Right cardiac atrium (tissue), 5 donors: ENCODE measurements at regions of chr10 and their contacts with region 1.

Region 1: DNA sequence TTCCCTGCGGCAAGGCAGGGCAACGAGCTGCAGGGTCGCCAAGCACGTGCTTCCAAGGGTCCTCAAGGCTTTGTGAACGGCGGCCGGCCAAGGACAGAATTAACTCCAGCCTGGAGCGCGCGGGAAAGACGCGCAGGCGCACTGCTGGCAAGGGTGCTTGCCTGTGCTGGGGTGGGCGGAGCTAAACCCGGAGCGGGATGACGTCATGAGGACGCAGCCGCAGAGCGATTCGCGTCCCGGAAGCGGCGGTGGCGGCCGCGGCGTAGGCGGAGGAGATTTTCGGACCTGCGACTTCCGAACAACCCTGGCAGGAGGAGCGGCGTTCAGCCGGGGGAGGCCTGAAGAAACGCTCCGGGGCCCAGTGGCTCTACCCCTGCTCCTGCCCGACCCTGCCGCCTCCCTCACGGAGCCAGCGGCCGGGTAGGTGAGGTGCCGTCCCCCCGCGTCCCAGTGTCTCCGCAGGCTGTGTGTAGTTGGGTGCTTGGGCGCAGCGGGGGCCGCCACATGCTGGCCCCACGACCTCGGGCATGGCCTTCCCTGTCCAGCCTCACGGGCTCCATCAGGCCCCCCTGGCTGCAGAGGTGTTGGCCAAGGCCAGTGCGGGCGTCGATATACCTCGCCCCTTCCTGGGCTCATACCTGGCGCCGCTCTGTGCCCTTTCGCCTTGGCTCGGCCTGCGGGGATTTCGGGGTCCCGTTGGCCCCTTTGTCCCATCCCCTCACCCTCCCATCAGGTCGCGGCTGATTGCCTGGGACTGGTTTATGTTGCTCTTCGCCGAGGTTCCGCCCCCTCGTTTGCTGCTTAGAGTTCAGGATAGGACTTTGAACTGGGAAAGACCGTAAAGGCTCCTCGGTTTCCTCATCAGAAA is at the start of gene ZFYVE27:
- DNase-seq: peak; percentile 97 to 99 (median 99)
- ATAC-seq: peak; percentile 95 to 96
- H3K4me3 ChIP-seq: peak within 1 kb of the TSS; percentile 74
- H3K27ac ChIP-seq: peak within 1 kb of the TSS; percentile 76
- H3K4me1 ChIP-seq: peaks cover 4% of the 10 kb centered on the region
- H3K27me3 ChIP-seq: no peaks in the 10 kb centered on the region
- total RNA-seq, gene ZFYVE27: 14.8 to 20.6 (median 17.7) TPM

Region 2: DNA sequence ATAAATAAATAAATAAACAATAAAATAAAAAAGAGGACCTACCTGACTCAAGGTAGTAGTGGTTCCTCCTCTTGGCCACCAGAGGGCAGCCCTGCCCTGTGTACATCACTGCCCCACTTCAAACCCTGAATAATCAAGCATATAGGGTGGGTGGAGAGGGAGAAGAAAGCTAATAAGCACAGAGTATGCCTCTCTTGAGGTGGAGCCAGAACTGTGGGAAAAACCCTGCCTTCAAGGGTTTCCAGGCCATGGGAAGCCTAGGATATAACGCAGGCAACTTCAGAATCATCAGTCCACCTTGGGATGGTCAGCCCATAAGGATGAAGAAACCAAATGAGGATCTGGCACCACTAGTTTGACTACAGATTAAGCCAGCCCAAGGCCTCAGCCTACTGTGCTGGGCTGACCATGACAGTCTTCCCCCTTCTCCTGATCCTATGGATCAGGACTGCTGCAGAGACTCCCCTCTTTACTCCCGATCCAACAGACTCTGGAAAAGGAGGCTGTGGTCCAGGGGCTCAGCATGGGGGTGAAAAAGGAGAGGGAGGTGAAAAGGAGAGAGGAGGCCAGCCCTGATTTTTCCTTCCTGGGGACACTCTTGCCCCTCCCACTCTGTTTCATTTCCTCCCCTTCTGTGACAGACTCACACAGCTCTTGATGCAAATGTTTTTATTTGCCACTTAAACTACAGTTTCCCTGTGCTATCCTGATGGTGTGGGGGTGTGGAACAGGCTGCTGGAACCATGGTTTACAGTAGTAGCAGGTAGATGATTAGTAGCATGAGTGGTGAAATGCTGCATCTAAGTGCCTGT is 60.2 kb before region 1 on chr10:
- intact Hi-C with region 1: loop called in 3 of 4 experiments (anchors 5 to 10 kb)
- DNase-seq: peak in 1 of 3 donors; percentile 53
- ATAC-seq: peak; percentile 65 to 68
- H3K4me3 ChIP-seq: no peak overlapping the region
- H3K27ac ChIP-seq: no peak overlapping the region
- H3K4me1 ChIP-seq: no peaks in the 10 kb centered on the region
- H3K27me3 ChIP-seq: no peaks in the 10 kb centered on the region